Breast epithelium (tissue), 4 donors: ENCODE measurements at regions of chr17 and their contacts with region 1.

Region 1: GRCh38 chr17:82775001-82775823 is 23.3 kb downstream of the TBCD start:
- DNase-seq: peak in 1 of 2 donors; percentile 83
- H3K4me3 ChIP-seq: peak overlapping the region in 2 of 3 donors; percentile 21 to 24
- H3K27ac ChIP-seq: no peak overlapping the region
- H3K4me1 ChIP-seq: no peaks in the 10 kb centered on the region
- H3K27me3 ChIP-seq: no peaks in the 10 kb centered on the region
- CTCF ChIP-seq: peak; percentile 81 to 87 (median 86)
- POLR2A ChIP-seq: no peak

Region 2: DNA sequence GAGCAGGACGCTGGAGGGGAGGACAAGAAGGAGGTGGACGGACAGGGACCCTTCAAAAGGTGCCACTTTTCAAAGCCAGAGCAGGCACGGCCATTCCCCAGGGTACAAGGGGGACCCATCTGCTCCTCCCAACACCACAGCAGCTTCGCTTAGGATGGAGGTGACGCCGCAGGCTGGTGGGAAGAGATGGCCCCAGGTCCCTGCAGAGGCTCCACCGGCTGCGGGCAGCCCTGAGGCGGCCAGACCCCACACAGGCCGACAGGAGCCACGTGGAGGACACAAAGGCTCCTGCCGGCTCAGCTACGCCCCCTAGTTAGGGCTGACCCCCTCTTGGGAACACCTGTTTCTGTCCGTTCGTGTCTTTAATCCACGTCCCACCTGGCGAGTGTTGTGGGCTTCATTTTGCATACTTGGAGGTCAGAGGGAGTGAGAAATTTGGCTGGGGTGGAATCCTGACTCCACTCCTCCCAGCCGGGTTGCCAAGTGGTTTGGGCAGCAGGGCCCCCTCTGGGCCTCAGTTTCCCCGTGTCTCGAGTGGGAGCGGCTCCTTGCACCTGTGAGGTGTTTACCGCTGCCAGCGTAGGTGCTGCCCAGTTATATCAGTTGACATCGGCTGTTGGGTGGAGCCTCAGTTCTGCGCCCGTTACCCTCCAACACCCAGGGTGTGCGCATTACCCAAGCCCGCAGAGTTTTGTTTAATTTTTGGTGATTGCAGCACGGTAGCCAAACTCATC is 64.5 kb before region 1 on chr17:
- intact Hi-C with region 1: no loop called
- DNase-seq: no peak
- H3K4me3 ChIP-seq: no peak overlapping the region
- H3K27ac ChIP-seq: no peak overlapping the region
- H3K4me1 ChIP-seq: no peaks in the 10 kb centered on the region
- H3K27me3 ChIP-seq: no peaks in the 10 kb centered on the region
- CTCF ChIP-seq: no peak
- POLR2A ChIP-seq: no peak

Region 3: GRCh38 chr17:82911822-82912221 is 136.6 kb after region 1 on chr17:
- intact Hi-C with region 1: loop called (anchors 2 kb)
- DNase-seq: no peak
- H3K4me3 ChIP-seq: no peak overlapping the region
- H3K27ac ChIP-seq: no peak overlapping the region
- H3K4me1 ChIP-seq: no peaks in the 10 kb centered on the region
- H3K27me3 ChIP-seq: no peaks in the 10 kb centered on the region
- CTCF ChIP-seq: no peak
- POLR2A ChIP-seq: no peak